Activated CD4-positive, alpha-beta memory T cell treated with anti-CD3 and anti-CD28 coated beads, Interleukin-2, amount 10 ng/mL, durations not matched to agents 7 days and 5 days (primary cell): ENCODE measurements at regions of chr1 and their contacts with region 1.

Region 1: DNA sequence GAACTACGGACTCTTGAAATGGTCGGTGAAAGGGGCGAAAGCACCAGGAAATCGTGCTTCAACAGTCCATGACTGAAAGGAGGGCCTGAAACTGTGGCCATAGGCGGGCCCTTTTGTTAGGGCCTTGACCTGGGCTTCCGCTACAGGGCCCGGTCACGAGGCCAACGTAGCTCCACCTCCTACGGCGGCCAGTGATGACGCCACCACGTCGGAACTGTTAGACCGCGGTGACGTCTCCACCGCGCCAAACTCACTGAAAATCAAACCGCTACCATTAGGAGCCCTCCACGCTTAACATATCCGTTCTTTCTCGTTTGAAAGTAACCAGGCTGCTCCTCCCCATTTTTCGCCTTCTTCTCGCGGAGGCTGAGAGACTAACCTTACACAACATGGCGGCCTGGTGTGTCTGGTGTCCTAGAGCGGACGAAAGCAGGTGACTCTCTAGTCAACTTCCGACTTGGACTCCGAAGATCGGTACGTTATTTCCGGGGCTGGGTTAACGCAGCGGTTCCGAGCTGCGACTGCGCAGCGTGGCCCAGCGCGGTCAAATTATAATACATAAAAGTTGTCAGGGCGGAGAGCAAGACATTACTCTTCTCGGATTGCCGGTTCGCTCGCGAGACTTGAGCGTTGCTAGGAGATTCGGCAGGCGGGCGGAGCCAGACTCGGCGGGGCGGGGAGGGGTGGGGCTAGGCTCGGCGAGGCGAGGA is 376 bp upstream of the CACYBP start:
- DNase-seq: peak; percentile 98
- H3K4me3 Mint-ChIP-seq: no peak overlapping the region
- H3K27ac Mint-ChIP-seq: no peak overlapping the region
- H3K4me1 Mint-ChIP-seq: peaks cover 39% of the 10 kb centered on the region
- H3K27me3 Mint-ChIP-seq: no peaks in the 10 kb centered on the region

Region 2: GRCh38 chr1:174769961-174770549 is 229.3 kb before region 1 on chr1:
- CTCF ChIA-PET with region 1: interaction called, 11 read pairs
- POLR2A ChIA-PET with region 1: interaction called, 5 read pairs
- DNase-seq: no peak
- H3K4me3 Mint-ChIP-seq: no peak overlapping the region
- H3K27ac Mint-ChIP-seq: no peak overlapping the region
- H3K4me1 Mint-ChIP-seq: peaks cover 6% of the 10 kb centered on the region
- H3K27me3 Mint-ChIP-seq: no peaks in the 10 kb centered on the region

Region 3: DNA sequence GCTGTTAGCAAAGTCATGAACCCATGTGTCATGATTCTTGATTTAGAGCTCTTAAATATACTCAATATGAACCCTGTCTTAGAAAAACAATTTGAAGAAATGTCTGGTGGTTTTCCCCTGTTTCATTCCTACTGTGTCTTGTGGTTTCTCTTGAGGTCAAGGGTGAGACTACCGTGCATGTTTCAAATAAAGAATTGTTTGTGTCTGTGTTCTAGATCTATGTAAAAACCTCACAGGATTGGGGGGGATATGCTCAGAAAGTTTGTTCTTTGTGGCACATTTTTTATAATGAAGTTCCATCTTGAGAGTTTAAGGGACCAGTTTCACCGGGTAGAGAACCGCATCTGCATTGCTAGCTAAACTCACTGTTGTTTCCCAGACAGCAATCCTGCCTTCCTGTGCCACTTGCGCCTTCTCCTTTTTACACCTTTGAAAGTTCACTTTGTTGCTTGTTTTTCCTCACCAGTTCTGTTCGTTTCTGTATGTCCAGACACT is 30.6 kb before region 1 on chr1:
- CTCF ChIA-PET with region 1: interaction called, 9 read pairs
- POLR2A ChIA-PET with region 1: interaction called, 203 read pairs
- DNase-seq: no peak
- H3K4me3 Mint-ChIP-seq: peak overlapping the region; percentile 62
- H3K27ac Mint-ChIP-seq: peak overlapping the region; percentile 93
- H3K4me1 Mint-ChIP-seq: peaks cover 77% of the 10 kb centered on the region
- H3K27me3 Mint-ChIP-seq: no peaks in the 10 kb centered on the region

Region 4: GRCh38 chr1:175015243-175015642 is 15.9 kb after region 1 on chr1:
- CTCF ChIA-PET with region 1: interaction called, 6 read pairs
- POLR2A ChIA-PET with region 1: interaction called, 203 read pairs
- DNase-seq: no peak
- H3K4me3 Mint-ChIP-seq: no peak overlapping the region
- H3K27ac Mint-ChIP-seq: no peak overlapping the region
- H3K4me1 Mint-ChIP-seq: peaks cover 8% of the 10 kb centered on the region
- H3K27me3 Mint-ChIP-seq: no peaks in the 10 kb centered on the region

Region 5: DNA sequence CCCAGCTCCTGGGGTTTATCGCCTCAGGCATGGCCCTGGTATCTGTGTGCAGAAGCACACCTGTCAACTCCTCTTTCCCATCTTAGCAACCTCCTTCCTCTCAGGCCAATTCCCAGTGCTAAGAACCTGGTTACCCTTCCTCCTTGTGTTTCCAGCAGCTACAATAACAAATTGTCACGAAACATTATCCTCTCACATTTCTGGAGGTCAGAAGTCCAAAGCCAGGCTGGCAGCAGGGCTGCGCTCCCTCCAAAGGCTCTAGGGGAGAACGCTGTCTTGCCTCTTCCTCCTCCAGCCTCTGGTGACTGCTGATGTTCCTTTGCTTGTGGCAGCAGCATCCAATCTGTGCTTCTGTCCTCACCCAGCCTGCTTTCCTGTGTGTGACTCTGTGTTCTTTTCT is 34.6 kb after region 1 on chr1:
- CTCF ChIA-PET with region 1: interaction called, 5 read pairs
- POLR2A ChIA-PET with region 1: interaction called, 19 read pairs
- DNase-seq: no peak
- H3K4me3 Mint-ChIP-seq: no peak overlapping the region
- H3K27ac Mint-ChIP-seq: no peak overlapping the region
- H3K4me1 Mint-ChIP-seq: peaks cover 8% of the 10 kb centered on the region
- H3K27me3 Mint-ChIP-seq: peaks cover 1% of the 10 kb centered on the region